HEK293 (cell line): ENCODE measurements at regions of chr12 and their contacts with region 1.

Region 1: DNA sequence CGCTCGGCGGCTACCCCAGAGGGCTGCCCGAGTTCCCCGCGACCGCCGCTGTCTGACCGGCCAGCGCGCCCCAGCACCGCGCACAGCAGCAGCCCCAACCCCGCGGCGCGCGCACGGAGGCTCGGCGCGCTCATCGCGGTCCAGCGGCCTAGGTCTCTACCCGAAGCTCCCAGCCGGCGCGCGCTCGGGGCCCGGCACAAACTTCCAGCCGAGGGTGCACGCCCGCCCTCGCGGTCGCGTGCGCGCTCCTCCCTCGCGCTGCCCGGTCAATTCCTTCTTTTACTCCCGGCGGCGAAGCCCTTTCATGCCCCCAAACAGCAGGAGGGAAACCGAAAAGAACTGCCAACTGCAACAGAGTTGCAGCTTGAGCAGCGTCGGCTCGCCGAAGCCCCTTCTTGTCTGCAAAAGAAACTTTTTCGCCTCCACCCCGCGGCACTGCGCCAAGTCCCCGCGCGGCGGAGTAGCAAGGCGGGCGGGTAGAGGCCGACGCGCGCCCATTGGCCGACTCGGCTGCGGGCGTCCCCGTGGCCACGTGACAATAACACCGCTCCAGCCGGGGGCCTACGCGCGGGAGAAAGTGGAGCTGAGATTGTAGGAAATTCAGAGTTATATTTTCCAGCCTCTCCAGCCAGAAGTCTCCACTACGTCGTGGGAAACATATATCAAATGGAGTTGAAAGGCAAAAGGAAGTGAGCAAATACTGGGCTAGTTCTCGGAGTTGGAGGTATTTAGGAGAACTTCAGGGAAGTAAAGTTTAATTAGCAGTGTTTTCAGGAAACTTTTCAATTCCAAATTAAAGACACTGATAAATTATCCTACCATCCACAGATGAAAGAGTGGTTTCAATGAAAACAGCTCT is at the start of gene LRIG3:
- H3K4me3 ChIP-seq: peak within 1 kb of the TSS; percentile 86
- H3K27ac ChIP-seq: peak within 1 kb of the TSS; percentile 100
- H3K4me1 ChIP-seq: peaks cover 40% of the 10 kb centered on the region
- CTCF ChIP-seq: peak; percentile 69

Region 2: GRCh38 chr12:58741226-58741625 is 179.1 kb before region 1 on chr12:
- CTCF ChIA-PET with region 1: no interaction called
- POLR2A ChIA-PET with region 1: no interaction called
- H3K4me3 ChIP-seq: no peak overlapping the region
- H3K27ac ChIP-seq: no peak overlapping the region
- H3K4me1 ChIP-seq: no peaks in the 10 kb centered on the region
- CTCF ChIP-seq: no peak

Region 3: GRCh38 chr12:59067083-59067482 is 146.8 kb after region 1 on chr12:
- CTCF ChIA-PET with region 1: interaction called, 3 read pairs
- POLR2A ChIA-PET with region 1: interaction called, 11 read pairs
- H3K4me3 ChIP-seq: no peak overlapping the region
- H3K27ac ChIP-seq: no peak overlapping the region
- H3K4me1 ChIP-seq: peaks cover 24% of the 10 kb centered on the region
- CTCF ChIP-seq: no peak

Region 4: GRCh38 chr12:59097876-59098275 is 177.5 kb after region 1 on chr12:
- CTCF ChIA-PET with region 1: no interaction called
- POLR2A ChIA-PET with region 1: no interaction called
- H3K4me3 ChIP-seq: no peak overlapping the region
- H3K27ac ChIP-seq: no peak overlapping the region
- H3K4me1 ChIP-seq: no peaks in the 10 kb centered on the region
- CTCF ChIP-seq: no peak

Region 5: DNA sequence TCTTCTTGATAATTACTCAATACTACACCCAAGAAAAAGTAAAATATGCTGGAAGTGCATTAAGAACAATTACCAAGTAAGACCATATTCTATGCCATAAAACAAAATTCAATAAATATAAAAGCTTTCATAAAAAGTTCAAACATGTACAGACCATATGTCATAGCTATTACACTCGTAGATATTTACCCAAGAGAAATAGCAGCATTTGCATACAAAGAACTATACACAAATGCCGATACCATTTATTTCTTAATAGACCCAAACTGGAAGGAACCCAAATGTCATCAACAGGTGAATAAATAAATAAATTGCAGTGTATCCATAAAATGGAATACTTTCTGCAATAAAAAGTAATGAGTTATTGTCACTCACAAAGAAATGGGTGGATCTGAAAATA is 597.2 kb after region 1 on chr12:
- CTCF ChIA-PET with region 1: no interaction called
- POLR2A ChIA-PET with region 1: no interaction called
- H3K4me3 ChIP-seq: no peak overlapping the region
- H3K27ac ChIP-seq: no peak overlapping the region
- H3K4me1 ChIP-seq: no peaks in the 10 kb centered on the region
- CTCF ChIP-seq: no peak